Motor neuron (in vitro differentiated cells): ENCODE measurements at regions of chr16 and their contacts with region 1.

Region 1: DNA sequence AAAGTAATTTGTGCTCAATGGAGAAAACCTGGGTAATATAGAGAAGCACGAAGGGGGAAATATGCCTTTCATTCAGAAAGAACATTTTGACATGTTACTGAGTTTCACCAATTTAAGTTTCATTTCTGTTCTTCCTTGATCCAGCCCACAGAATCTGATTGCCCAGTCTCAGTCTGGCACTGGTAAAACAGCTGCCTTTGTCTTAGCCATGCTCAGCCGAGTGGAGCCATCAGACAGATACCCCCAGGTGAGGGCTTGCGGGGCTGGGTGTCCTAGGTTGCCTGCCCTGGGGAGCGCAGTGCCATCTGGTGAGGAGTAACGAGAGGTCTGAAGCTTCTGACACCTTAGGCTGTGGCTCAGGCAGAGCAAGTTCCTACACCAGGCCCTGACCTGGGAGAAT is 17.7 kb downstream of the DDX19A start:
- ATAC-seq: no peak
- H3K4me3 ChIP-seq: no peak overlapping the region
- H3K27ac ChIP-seq: no peak overlapping the region
- H3K4me1 ChIP-seq: no peaks in the 10 kb centered on the region

Region 2: GRCh38 chr16:70529051-70529777 is 164.8 kb after region 1 on chr16:
- in situ Hi-C with region 1: loop called in 1 of 9 experiments (anchors 25 kb)
- ATAC-seq: peak in 3 of 8 experiments; percentile 11 to 42 (median 26)
- H3K4me3 ChIP-seq: no peak overlapping the region
- H3K27ac ChIP-seq: no peak overlapping the region
- H3K4me1 ChIP-seq: peaks cover 21 to 23% of the 10 kb centered on the region in 2 donors

Region 3: DNA sequence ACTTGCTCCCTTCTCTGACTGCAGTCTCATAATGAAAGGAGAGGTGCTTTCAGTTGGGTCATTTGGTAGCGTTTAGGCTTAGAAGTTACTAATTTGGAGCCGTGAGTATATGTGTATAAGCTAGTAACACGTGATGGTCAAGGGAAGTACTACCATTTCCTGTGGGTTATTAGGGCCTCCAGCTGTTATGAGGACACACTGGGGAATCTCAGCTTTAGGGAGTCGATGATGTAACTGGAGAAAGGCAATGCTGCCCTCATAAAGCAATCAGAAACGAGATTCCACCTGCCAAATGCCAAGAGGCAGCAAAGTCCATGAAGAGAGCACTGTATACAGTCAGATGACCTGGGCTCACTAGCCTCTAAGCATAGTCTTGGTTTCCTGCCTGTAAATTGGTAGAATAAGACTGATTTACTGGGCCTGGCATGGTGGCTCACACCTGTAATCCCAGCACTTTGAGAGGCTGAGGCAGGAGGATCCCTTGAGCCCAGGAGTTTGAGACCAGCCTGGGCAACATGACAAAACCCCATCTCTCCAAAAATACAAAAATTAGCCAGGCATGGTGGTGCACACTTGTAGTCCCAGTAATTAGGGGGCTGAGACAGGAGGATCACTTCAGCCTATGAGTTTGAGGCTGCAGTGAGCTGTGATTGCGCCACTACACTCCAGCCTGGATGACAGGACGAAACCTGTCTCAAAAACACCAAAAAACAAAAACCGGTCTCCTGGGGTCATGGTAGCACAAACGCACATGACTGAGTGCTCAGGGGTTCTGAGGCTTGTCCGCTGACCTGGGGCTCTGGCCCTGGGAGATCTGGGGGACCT is 212.2 kb after region 1 on chr16:
- in situ Hi-C with region 1: loop called in 1 of 9 experiments (anchors 25 kb)
- ATAC-seq: peak in 5 of 8 experiments; percentile 5 to 26 (median 12)
- H3K4me3 ChIP-seq: no peak overlapping the region
- H3K27ac ChIP-seq: no peak overlapping the region
- H3K4me1 ChIP-seq: no peaks in the 10 kb centered on the region

Region 4: DNA sequence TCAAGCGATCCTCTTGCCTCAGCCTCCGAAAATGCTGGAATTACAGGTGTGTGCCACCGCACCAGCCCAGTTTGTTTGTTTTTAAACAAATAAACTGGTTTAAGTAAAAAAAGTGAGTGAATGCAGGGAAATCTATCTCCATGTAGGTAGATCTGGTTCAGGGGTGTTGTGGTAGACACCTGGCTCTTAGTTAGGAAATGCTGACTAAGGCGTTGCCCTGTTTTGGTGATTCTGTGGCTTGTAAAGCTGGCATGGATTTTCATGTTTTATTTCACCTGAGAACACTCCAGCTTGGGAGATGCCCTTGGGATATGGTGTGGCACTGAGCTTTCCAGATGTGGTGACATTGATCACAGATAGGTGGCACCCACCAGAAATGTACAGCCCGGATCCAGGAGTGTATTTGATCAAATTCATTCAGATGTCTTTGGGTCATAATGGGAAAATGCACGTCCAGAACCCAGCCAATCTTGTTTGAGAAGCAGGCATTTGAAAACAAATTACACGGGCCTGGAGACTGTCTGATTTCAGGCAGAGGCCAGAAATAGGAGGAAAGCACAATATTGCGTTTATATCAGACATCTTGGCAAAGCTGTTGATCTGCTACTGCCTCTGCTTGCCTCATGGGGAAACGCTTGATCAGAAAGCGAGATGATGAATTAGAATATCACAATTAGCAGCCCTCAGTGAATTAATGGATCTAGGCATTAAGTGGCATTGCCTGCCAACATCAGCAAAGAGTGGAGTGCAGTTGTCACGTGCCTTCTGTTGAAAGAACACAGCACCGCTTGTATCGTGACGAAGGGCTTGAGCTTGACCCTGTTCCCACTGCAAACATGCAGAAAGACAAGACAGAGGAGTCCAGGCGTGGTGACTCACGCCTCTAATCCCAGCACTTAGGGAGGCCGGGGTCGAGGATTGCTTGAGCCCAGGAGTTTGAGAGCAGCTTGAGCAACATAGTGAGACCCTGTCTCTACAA is 274.7 kb after region 1 on chr16:
- in situ Hi-C with region 1: loop called in 1 of 9 experiments (anchors 25 kb)
- ATAC-seq: peak in 6 of 8 experiments; percentile 51 to 95 (median 74)
- H3K4me3 ChIP-seq: no peak overlapping the region
- H3K27ac ChIP-seq: no peak overlapping the region
- H3K4me1 ChIP-seq: peaks cover 2 to 4% of the 10 kb centered on the region in 2 donors